WTC11 (cell line): ENCODE measurements at regions of chr12 and their contacts with region 1.

Region 1: DNA sequence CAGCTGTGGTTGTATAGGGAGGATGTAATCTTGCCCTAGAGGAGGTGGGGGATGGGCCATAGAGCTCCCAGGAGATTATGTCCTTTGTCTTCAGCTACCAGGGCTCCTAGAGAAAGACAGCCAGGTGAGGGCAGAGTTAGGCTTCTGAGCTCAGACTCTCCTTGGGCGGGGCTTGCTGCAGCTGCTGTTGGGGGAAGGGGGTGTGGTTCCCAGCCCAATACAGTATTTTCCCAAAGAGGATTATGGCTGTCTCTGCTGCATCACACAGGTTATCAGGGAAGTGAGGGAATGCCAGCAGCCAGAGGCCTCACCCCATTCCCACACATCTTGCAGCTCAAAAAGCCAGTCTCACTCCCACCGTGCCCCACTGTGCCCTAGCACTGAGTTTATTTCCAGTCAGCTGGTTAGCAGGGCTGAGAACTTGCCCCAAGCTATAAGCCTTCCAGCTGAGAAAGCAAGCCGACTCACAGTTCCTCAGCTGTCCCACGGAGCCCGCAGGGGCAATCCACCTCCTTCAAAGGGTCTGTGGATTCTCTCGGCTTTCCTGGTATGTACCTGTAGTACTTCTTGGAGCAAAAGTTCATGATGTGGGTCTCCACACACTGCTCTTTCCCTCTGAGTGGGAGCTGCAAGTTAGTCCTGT is 217.3 kb upstream of the CPNE8 start:
- DNase-seq: peak; percentile 69
- ATAC-seq: peak; percentile 98
- H3K4me3 Mint-ChIP-seq: no peak overlapping the region
- H3K27ac Mint-ChIP-seq: peak overlapping the region; percentile 69; the same call in 1 of the 2 replicates
- H3K4me1 Mint-ChIP-seq: peaks cover 38% of the 10 kb centered on the region
- H3K27me3 Mint-ChIP-seq: no peaks in the 10 kb centered on the region
- CTCF ChIP-seq: no peak

Region 2: DNA sequence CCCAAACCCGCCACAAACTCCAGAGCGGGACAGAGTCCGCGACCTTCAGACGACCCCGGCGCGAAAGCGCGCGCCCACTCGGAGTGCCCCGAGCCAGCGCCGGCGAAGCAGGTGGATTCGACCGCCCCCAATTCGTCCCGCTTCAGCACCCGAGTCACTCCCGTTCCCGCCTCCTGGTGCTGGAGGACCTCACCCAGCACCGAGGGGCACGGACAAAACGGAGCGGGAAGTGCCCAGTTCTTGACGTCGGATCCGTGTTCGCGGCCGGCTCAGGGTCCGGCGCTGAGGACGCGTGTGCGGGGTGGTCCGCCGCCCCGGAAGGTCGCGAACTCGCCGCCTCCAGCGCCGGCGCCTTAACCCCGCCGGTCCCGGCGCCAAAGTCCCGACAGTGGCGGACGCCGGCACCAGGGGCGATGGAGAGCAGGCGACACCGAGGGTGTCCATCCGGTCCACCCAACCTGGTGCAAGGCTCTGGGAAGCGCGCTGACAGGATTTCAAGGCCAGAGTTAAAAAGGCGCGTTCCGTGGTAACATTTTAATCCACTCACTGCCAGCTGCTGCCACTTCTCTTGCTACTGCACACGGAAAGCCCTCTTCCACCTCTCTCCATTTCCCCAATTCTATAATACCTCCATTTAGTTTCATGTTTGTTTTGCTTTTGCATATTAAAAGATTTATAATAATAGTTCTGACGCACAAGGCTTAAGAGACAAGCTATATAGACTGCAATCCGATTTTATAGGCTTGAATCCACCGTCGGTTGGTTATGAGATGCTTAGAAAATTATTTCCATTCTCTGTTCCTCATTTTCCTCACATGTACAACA is 22.7 kb after region 1 on chr12:
- CTCF ChIA-PET with region 1: interaction called, 10 read pairs
- POLR2A ChIA-PET with region 1: no interaction called
- DNase-seq: peak; percentile 92
- ATAC-seq: peak; percentile 97
- H3K4me3 Mint-ChIP-seq: peak overlapping the region; percentile 69
- H3K27ac Mint-ChIP-seq: no peak overlapping the region
- H3K4me1 Mint-ChIP-seq: 0 out of 2 replicates have a peak, but pooled peaks cover 4% of the 10 kb centered on the region
- H3K27me3 Mint-ChIP-seq: peaks cover 38% of the 10 kb centered on the region
- CTCF ChIP-seq: peak; percentile 86

Region 3: DNA sequence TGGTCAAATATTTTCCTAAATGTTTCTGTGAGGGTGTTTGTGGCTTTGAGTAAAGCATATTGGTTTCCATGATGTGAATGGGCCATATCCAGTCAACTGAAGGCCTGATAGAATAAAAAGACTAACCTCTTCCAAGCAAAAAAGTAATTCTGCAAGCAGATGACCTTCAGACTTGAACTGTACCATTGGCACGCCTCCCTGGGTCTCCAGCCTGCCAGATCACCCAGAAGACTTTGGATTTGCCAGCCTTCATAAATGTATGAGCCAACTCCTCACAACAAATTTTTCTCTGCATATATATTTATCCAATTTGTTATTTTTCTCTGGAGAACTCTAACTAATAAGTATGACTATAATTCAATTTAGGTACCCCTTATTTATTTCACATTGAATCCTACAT is 129.9 kb after region 1 on chr12:
- CTCF ChIA-PET with region 1: interaction called, 10 read pairs
- POLR2A ChIA-PET with region 1: no interaction called
- DNase-seq: no peak
- ATAC-seq: no peak
- H3K4me3 Mint-ChIP-seq: no peak overlapping the region
- H3K27ac Mint-ChIP-seq: no peak overlapping the region
- H3K4me1 Mint-ChIP-seq: peaks cover 10% of the 10 kb centered on the region
- H3K27me3 Mint-ChIP-seq: no peaks in the 10 kb centered on the region
- CTCF ChIP-seq: no peak